CD4-positive, alpha-beta memory T cell (primary cell): ENCODE measurements at regions of chr2 and their contacts with region 1.

Region 1: DNA sequence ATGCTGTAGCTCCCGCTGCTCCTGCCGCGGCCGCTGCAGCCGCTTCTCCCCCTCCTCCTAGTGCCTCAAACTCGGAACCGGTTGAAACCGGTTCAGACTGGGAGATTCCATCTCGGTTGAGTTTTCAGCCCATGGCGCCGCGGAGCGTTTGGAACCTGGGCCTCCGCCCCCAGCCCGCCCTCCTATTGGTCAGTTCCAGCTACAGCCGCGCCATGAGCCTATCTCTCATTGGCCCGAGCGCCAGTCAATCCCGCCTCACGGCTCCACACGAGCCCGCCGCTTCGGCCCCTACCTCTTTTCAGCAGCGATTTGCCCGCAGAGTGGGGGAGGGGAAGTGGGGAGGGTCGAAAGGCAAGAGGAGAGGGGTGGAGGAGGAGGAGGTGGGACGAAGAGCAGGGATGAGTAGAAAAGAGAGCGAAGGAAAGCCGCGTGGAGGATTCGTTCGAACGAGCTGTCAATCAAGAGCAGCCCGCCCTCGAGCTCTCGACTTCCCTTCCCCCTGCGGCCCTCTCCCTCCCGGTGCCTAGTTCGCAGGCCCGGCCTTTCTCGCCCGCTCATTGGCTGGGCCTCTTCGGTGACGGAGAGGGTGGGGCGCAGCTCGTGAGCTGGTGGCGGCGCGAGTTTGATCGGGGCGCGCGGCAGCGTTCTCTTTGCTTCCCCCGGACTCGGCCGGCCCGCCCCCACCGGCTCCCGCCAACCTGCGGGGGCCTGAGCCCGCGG is at the start of gene XPO1:
- DNase-seq: peak; percentile 99
- H3K4me3 ChIP-seq: peak within 1 kb of the TSS; percentile 78 to 94
- H3K4me3 Mint-ChIP-seq: peak within 1 kb of the TSS; percentile 92 to 100 (median 98)
- H3K27ac ChIP-seq: peak within 1 kb of the TSS; percentile 96
- H3K27ac Mint-ChIP-seq: peak within 1 kb of the TSS; percentile 99 to 100 (median 100)
- H3K4me1 ChIP-seq: peaks cover 36% of the 10 kb centered on the region
- H3K4me1 Mint-ChIP-seq: peaks cover 23 to 50% (median 29%) of the 10 kb centered on the region in 4 donors
- H3K27me3 ChIP-seq: no peaks in the 10 kb centered on the region
- H3K27me3 Mint-ChIP-seq: peaks cover 0 to 2% of the 10 kb centered on the region in 2 donors
- total RNA-seq, gene XPO1: 174 to 180 TPM

Region 2: GRCh38 chr2:60756191-60757041 is 781.9 kb before region 1 on chr2 and contains the start of gene PAPOLG:
- CTCF ChIA-PET with region 1: no interaction called
- POLR2A ChIA-PET with region 1: no interaction called
- intact Hi-C with region 1: loop called (anchors 1 kb)
- DNase-seq: peak; percentile 92 to 96 (median 93)
- H3K4me3 ChIP-seq: peak within 1 kb of the TSS; percentile 76 to 92
- H3K4me3 Mint-ChIP-seq: peak within 1 kb of the TSS; percentile 98 to 100 (median 100)
- H3K27ac ChIP-seq: peak within 1 kb of the TSS; percentile 89
- H3K27ac Mint-ChIP-seq: peak within 1 kb of the TSS; percentile 84 to 100 (median 99)
- H3K4me1 ChIP-seq: peaks cover 36% of the 10 kb centered on the region
- H3K4me1 Mint-ChIP-seq: peaks cover 28 to 51% (median 40%) of the 10 kb centered on the region in 4 donors
- H3K27me3 ChIP-seq: no peaks in the 10 kb centered on the region
- H3K27me3 Mint-ChIP-seq: no peaks in the 10 kb centered on the region
- total RNA-seq, gene PAPOLG: 40.1 to 40.3 TPM

Region 3: DNA sequence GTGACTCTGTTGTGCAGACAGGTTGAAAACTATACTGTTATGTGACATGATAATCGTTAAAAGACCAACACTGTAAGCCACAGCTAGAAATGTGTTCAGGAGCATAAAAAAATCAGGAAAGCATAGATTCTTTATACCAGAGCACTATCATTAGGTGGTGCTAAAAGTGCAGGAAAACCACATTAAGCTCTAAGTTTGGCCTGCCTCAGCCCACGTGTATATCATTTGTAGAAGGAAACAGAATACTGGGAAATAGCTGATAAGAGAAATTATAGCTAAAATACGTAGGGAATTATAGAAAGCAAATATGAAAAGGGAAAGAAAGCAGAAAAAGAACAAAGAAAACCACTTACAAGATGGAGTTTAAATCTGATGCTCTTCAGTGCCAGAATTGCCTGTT is 402.9 kb before region 1 on chr2:
- CTCF ChIA-PET with region 1: no interaction called
- POLR2A ChIA-PET with region 1: no interaction called
- intact Hi-C with region 1: no loop called
- DNase-seq: peak in 4 of 5 donors; percentile 5 to 17 (median 10)
- H3K4me3 ChIP-seq: no peak overlapping the region
- H3K4me3 Mint-ChIP-seq: no peak overlapping the region
- H3K27ac ChIP-seq: no peak overlapping the region
- H3K27ac Mint-ChIP-seq: peak overlapping the region in 1 of 7 donors; percentile 62
- H3K4me1 ChIP-seq: no peaks in the 10 kb centered on the region
- H3K4me1 Mint-ChIP-seq: peaks cover 0 to 5% (median under 1%) of the 10 kb centered on the region in 4 donors
- H3K27me3 ChIP-seq: no peaks in the 10 kb centered on the region
- H3K27me3 Mint-ChIP-seq: no peaks in the 10 kb centered on the region

Region 4: GRCh38 chr2:61426267-61426897 is 112.0 kb before region 1 on chr2:
- CTCF ChIA-PET with region 1: interaction called, 22 read pairs
- POLR2A ChIA-PET with region 1: interaction called, 10 read pairs
- intact Hi-C with region 1: loop called (anchors 1 kb)
- DNase-seq: peak; percentile 67 to 76 (median 71)
- H3K4me3 ChIP-seq: no peak overlapping the region
- H3K4me3 Mint-ChIP-seq: peak overlapping the region in 4 of 8 donors; percentile 4 to 54 (median 40)
- H3K27ac ChIP-seq: peak overlapping the region; percentile 19
- H3K27ac Mint-ChIP-seq: peak overlapping the region; percentile 73 to 91 (median 89)
- H3K4me1 ChIP-seq: peaks cover 57% of the 10 kb centered on the region
- H3K4me1 Mint-ChIP-seq: peaks cover 49 to 74% (median 66%) of the 10 kb centered on the region in 4 donors
- H3K27me3 ChIP-seq: no peaks in the 10 kb centered on the region
- H3K27me3 Mint-ChIP-seq: no peaks in the 10 kb centered on the region

Region 5: GRCh38 chr2:61493523-61493942 is 44.8 kb before region 1 on chr2:
- CTCF ChIA-PET with region 1: interaction called, 10 read pairs
- POLR2A ChIA-PET with region 1: interaction called, 12 read pairs
- intact Hi-C with region 1: loop called (anchors 1 kb)
- DNase-seq: peak in 4 of 5 donors; percentile 18 to 30 (median 22)
- H3K4me3 ChIP-seq: peak overlapping the region in 1 of 2 donors; percentile 5
- H3K4me3 Mint-ChIP-seq: peak overlapping the region in 7 of 8 donors; percentile 23 to 79 (median 57)
- H3K27ac ChIP-seq: peak overlapping the region; percentile 23
- H3K27ac Mint-ChIP-seq: peak overlapping the region; percentile 43 to 87 (median 70)
- H3K4me1 ChIP-seq: peaks cover 17% of the 10 kb centered on the region
- H3K4me1 Mint-ChIP-seq: peaks cover 11 to 29% (median 20%) of the 10 kb centered on the region in 4 donors
- H3K27me3 ChIP-seq: no peaks in the 10 kb centered on the region
- H3K27me3 Mint-ChIP-seq: no peaks in the 10 kb centered on the region

Region 6: DNA sequence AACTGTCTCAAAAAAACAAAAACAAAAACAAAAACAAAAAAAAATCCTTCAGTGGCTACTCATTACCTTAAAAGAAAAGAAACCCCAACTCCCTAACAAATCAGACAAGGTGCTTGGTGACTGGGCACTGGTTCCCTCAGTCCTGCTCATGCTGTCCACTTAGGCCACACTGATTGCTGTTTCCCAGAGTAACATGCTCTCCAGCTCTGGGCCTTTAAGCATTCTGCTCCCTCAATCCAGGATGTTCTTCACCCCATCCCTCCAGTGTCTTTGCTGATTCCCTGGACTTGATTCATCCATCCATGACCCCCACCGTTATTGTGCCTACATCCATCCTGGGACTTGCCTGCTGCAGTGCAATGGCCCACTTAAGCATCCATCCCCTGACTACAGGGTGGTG is 16.2 kb after region 1 on chr2:
- CTCF ChIA-PET with region 1: no interaction called
- POLR2A ChIA-PET with region 1: no interaction called
- intact Hi-C with region 1: no loop called
- DNase-seq: no peak
- H3K4me3 ChIP-seq: no peak overlapping the region
- H3K4me3 Mint-ChIP-seq: no peak overlapping the region
- H3K27ac ChIP-seq: no peak overlapping the region
- H3K27ac Mint-ChIP-seq: no peak overlapping the region
- H3K4me1 ChIP-seq: no peaks in the 10 kb centered on the region
- H3K4me1 Mint-ChIP-seq: no peaks in the 10 kb centered on the region
- H3K27me3 ChIP-seq: no peaks in the 10 kb centered on the region
- H3K27me3 Mint-ChIP-seq: peaks cover 0 to 2% of the 10 kb centered on the region in 2 donors

Region 7: GRCh38 chr2:61694312-61695274 is 156.2 kb after region 1 on chr2:
- CTCF ChIA-PET with region 1: no interaction called
- POLR2A ChIA-PET with region 1: interaction called, 4 read pairs
- intact Hi-C with region 1: loop called (anchors 2 kb)
- DNase-seq: peak; percentile 74 to 82 (median 77)
- H3K4me3 ChIP-seq: peak overlapping the region; percentile 43 to 83
- H3K4me3 Mint-ChIP-seq: peak overlapping the region; percentile 89 to 95 (median 93)
- H3K27ac ChIP-seq: peak overlapping the region; percentile 46
- H3K27ac Mint-ChIP-seq: peak overlapping the region; percentile 74 to 96 (median 89)
- H3K4me1 ChIP-seq: peaks cover 15% of the 10 kb centered on the region
- H3K4me1 Mint-ChIP-seq: peaks cover 6 to 16% (median 12%) of the 10 kb centered on the region in 4 donors
- H3K27me3 ChIP-seq: no peaks in the 10 kb centered on the region
- H3K27me3 Mint-ChIP-seq: no peaks in the 10 kb centered on the region

Region 8: GRCh38 chr2:61854474-61855182 is 316.3 kb after region 1 on chr2:
- CTCF ChIA-PET with region 1: no interaction called
- POLR2A ChIA-PET with region 1: interaction called, 30 read pairs
- intact Hi-C with region 1: loop called (anchors 1 kb)
- DNase-seq: peak; percentile 92 to 98 (median 94)
- H3K4me3 ChIP-seq: peak overlapping the region; percentile 85 to 95
- H3K4me3 Mint-ChIP-seq: peak overlapping the region; percentile 94 to 99 (median 96)
- H3K27ac ChIP-seq: peak overlapping the region; percentile 69
- H3K27ac Mint-ChIP-seq: peak overlapping the region; percentile 87 to 98 (median 95)
- H3K4me1 ChIP-seq: peaks cover 16% of the 10 kb centered on the region
- H3K4me1 Mint-ChIP-seq: peaks cover 7 to 25% (median 16%) of the 10 kb centered on the region in 4 donors
- H3K27me3 ChIP-seq: no peaks in the 10 kb centered on the region
- H3K27me3 Mint-ChIP-seq: no peaks in the 10 kb centered on the region